Mammary epithelial cell (primary cell): ENCODE measurements at regions of chr14 and their contacts with region 1.

Region 1: GRCh38 chr14:80987235-80988032 is 32.0 kb downstream of the TSHR start:
- DNase-seq: peak; percentile 68
- H3K4me3 ChIP-seq: no peak overlapping the region
- H3K27ac ChIP-seq: no peak overlapping the region
- H3K4me1 ChIP-seq: no peaks in the 10 kb centered on the region
- H3K27me3 ChIP-seq: no peaks in the 10 kb centered on the region
- CTCF ChIP-seq: peak; percentile 92 to 98

Region 2: GRCh38 chr14:80872645-80873044 is 114.8 kb before region 1 on chr14:
- CTCF ChIA-PET with region 1: no interaction called
- dilution Hi-C with region 1: no loop called
- in situ Hi-C with region 1: no loop called
- intact Hi-C with region 1: loop called (anchors 5 kb)
- DNase-seq: no peak
- H3K4me3 ChIP-seq: no peak overlapping the region
- H3K27ac ChIP-seq: no peak overlapping the region
- H3K4me1 ChIP-seq: peaks cover 4% of the 10 kb centered on the region
- H3K27me3 ChIP-seq: no peaks in the 10 kb centered on the region
- CTCF ChIP-seq: no peak

Region 3: DNA sequence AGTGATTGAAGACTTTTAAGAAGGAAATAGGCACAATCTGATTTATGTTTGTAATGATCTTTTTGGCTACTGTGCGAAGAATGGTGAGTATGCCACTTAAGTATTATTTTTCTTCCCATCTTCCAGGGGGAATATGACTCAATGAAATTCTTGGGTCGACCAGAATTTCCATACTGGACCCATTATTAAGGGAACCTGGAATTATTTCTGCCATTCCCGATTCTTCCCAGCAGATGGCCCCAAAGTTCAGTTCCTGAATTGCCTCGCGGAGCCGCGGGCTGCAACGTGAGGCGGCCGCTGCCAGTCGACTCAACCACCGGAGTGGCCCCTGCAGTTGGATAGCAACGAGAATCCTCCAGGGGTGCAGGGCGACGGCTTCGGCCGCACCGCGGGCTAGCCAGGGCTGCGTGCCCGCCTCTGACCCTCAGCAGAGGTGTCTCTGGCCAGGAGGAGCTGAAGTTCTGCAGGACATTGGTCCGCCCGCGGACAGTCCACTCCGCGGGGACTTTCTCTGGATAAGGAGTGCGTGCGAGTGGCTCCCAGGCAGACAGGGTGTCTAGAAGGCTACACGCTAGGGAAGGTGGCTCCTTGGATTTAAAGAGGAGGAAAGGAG is 32.6 kb before region 1 on chr14:
- CTCF ChIA-PET with region 1: no interaction called
- dilution Hi-C with region 1: no loop called
- in situ Hi-C with region 1: no loop called
- intact Hi-C with region 1: loop called (anchors 1 kb)
- DNase-seq: peak; percentile 63
- H3K4me3 ChIP-seq: peak overlapping the region; percentile 36 to 58 (median 42)
- H3K27ac ChIP-seq: no peak overlapping the region
- H3K4me1 ChIP-seq: no peaks in the 10 kb centered on the region
- H3K27me3 ChIP-seq: peaks cover 2% of the 10 kb centered on the region
- CTCF ChIP-seq: peak; percentile 61 to 82

Region 4: DNA sequence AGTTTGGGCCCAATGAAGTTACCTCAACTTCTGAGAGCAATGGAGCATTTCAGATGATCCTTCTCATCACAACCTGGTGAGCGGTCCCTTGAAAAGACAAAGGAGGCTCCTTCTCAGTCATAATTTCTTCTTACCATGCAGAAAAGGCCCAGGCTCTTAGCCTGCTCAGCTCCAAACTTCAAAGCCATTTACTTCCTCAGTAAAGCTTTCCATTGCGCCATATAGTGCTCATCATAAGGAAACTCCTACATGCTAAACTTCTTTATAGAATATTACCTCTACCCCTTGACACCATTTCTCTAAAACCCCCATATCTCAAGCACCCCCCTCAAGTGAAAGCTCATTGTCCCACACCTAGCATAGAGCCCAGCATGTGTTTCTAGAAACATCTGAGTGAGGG is 106.2 kb after region 1 on chr14:
- CTCF ChIA-PET with region 1: interaction called, 12 read pairs
- dilution Hi-C with region 1: no loop called
- in situ Hi-C with region 1: no loop called
- intact Hi-C with region 1: no loop called
- DNase-seq: no peak
- H3K4me3 ChIP-seq: no peak overlapping the region
- H3K27ac ChIP-seq: no peak overlapping the region
- H3K4me1 ChIP-seq: no peaks in the 10 kb centered on the region
- H3K27me3 ChIP-seq: peaks cover 1% of the 10 kb centered on the region
- CTCF ChIP-seq: no peak

Region 5: GRCh38 chr14:81170104-81170828 is 182.8 kb after region 1 on chr14:
- CTCF ChIA-PET with region 1: no interaction called
- dilution Hi-C with region 1: no loop called
- in situ Hi-C with region 1: loop called (anchors 10 to 25 kb)
- intact Hi-C with region 1: no loop called
- DNase-seq: peak; percentile 83
- H3K4me3 ChIP-seq: peak overlapping the region; percentile 59 to 67 (median 65)
- H3K27ac ChIP-seq: peak overlapping the region; percentile 71
- H3K4me1 ChIP-seq: peaks cover 11% of the 10 kb centered on the region
- H3K27me3 ChIP-seq: no peaks in the 10 kb centered on the region
- CTCF ChIP-seq: peak; percentile 82 to 93